ENCODE measurements at regions of chr12 and their contacts with region 1.

Region 1: DNA sequence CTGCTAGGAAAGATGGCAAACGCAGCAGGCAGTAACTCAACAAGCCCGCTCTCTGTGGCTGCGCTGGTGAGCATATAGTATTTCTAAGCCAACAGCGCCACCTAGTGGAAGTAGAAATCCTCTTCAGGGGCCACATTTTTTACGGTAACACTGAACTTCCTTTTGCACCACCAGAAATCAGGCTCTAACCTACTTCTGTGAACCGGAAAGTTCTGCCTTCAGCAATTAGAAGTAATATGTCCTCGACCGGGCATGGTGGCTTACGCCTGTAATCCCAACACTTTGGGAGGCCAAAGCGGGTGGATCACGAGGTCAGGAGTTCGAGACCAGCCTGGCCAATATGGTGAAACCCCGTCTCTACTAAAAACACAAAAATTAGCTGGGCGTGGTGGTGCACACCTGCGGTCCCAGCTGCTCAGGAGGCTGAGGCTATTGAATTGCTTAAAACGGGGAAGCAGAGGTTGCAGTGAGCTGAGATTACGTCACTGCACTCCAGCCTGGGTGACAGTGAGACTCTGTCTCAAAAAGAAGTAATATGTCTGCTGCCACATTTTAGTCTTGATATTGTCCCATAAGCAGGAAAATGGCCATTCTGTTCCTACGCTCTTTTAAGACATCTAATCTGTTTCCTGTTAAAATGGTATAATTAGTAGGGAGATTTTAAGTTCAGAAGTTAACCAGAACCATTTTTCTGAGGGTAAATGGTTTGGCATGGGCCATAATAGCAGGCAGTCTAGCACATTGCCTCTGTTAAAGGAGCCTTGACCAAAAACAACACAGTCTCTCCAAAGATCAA is 26.8 kb downstream of the APOBEC1 start:
- DNase-seq: peak; percentile 88
- H3K4me3 ChIP-seq: peak overlapping the region in 6 of 8 donors; percentile 39 to 67 (median 40)
- H3K27ac ChIP-seq: peak overlapping the region in 7 of 8 donors; percentile 31 to 78 (median 63)
- H3K4me1 ChIP-seq: peaks cover 4 to 26% (median 13%) of the 10 kb centered on the region in 6 donors
- H3K27me3 ChIP-seq: peaks cover 0 to 32% (median 0%) of the 10 kb centered on the region in 7 donors
- CTCF ChIP-seq: peak; percentile 72 to 96 (median 91)
- POLR2A ChIP-seq: no peak

Region 2: GRCh38 chr12:7219599-7220243 is 419.2 kb before region 1 on chr12:
- intact Hi-C with region 1: loop called (anchors 5 kb)
- DNase-seq: peak; percentile 82
- H3K4me3 ChIP-seq: no peak overlapping the region
- H3K27ac ChIP-seq: no peak overlapping the region
- H3K4me1 ChIP-seq: no peaks in the 10 kb centered on the region
- H3K27me3 ChIP-seq: no peaks in the 10 kb centered on the region
- CTCF ChIP-seq: peak; percentile 64 to 88 (median 86)
- POLR2A ChIP-seq: no peak

Region 3: GRCh38 chr12:7433276-7433822 is 205.6 kb before region 1 on chr12:
- intact Hi-C with region 1: no loop called
- DNase-seq: no peak
- H3K4me3 ChIP-seq: no peak overlapping the region
- H3K27ac ChIP-seq: no peak overlapping the region
- H3K4me1 ChIP-seq: no peaks in the 10 kb centered on the region
- H3K27me3 ChIP-seq: peaks cover 0 to 13% (median 0%) of the 10 kb centered on the region in 7 donors
- CTCF ChIP-seq: no peak
- POLR2A ChIP-seq: no peak

Region 4: GRCh38 chr12:7460375-7461259 is 178.3 kb before region 1 on chr12:
- intact Hi-C with region 1: loop called (anchors 10 kb)
- DNase-seq: no peak
- H3K4me3 ChIP-seq: no peak overlapping the region
- H3K27ac ChIP-seq: no peak overlapping the region
- H3K4me1 ChIP-seq: no peaks in the 10 kb centered on the region
- H3K27me3 ChIP-seq: no peaks in the 10 kb centered on the region
- CTCF ChIP-seq: peak; percentile 52 to 89 (median 73)
- POLR2A ChIP-seq: no peak

Measured in spleen (tissue), 13 donors.